Motor neuron (in vitro differentiated cells): ENCODE measurements at regions of chr3 and their contacts with region 1.

Region 1: GRCh38 chr3:120795017-120795648 is 52.6 kb downstream of the GTF2E1 start:
- ATAC-seq: peak; percentile 60 to 99 (median 84)
- H3K4me3 ChIP-seq: no peak overlapping the region
- H3K27ac ChIP-seq: no peak overlapping the region
- H3K4me1 ChIP-seq: no peaks in the 10 kb centered on the region

Region 2: DNA sequence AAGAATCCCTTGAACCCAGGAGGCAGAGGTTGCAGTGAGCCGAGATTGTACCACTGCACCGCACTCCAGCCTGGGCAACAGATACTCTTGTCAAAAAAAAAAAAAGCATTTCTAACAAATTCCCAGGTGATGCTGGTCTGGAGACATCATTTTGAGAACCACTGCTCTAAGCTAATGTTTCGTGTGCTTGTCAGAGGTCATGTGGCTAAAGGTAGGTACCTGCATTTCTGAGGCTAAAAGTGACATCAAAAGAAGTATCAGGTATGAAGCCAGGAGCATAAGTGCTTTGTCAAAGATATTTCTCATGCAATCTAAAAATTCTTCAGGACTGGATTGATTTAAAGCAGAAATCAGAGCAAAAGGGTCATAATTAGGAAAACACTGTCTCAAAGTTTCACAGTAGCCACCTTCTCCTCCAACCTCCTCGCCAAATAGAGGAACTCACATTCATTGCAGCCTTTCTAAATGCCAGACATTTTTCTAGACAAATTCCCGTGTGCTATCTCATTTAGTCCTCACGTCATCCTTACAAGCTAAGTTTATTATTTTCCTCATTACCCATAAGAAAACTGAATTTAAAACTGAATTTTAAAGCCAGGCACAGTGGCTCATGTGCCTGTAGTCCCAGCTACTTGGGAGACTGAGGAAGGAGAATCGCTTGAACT is 675.2 kb before region 1 on chr3:
- in situ Hi-C with region 1: no loop called
- ATAC-seq: no peak
- H3K4me3 ChIP-seq: no peak overlapping the region
- H3K27ac ChIP-seq: no peak overlapping the region
- H3K4me1 ChIP-seq: no peaks in the 10 kb centered on the region

Region 3: GRCh38 chr3:120449701-120450599 is 345.2 kb before region 1 on chr3:
- in situ Hi-C with region 1: loop called in 1 of 9 experiments (anchors 25 kb)
- ATAC-seq: peak; percentile 11 to 55 (median 34)
- H3K4me3 ChIP-seq: peak overlapping the region; percentile 50 to 82 (median 57)
- H3K27ac ChIP-seq: no peak overlapping the region
- H3K4me1 ChIP-seq: peaks cover 21 to 29% of the 10 kb centered on the region in 2 donors

Region 4: GRCh38 chr3:120558771-120559241 is 236.3 kb before region 1 on chr3:
- in situ Hi-C with region 1: loop called in 4 of 9 experiments (anchors 25 kb)
- ATAC-seq: peak; percentile 62 to 87 (median 73)
- H3K4me3 ChIP-seq: peak overlapping the region; percentile 24 to 40 (median 35)
- H3K27ac ChIP-seq: peak overlapping the region; percentile 76 to 82
- H3K4me1 ChIP-seq: peaks cover 24 to 35% of the 10 kb centered on the region in 2 donors

Region 5: GRCh38 chr3:120661118-120661935 is 133.8 kb before region 1 on chr3:
- in situ Hi-C with region 1: no loop called
- ATAC-seq: peak in 3 of 8 experiments; percentile 63 to 97 (median 86)
- H3K4me3 ChIP-seq: no peak overlapping the region
- H3K27ac ChIP-seq: no peak overlapping the region
- H3K4me1 ChIP-seq: no peaks in the 10 kb centered on the region